Calu3 (cell line): ENCODE measurements at regions of chr9 and their contacts with region 1.

Region 1: GRCh38 chr9:131608493-131609037 is 63.2 kb downstream of the PRRT1B start:
- DNase-seq: peak; percentile 60
- H3K4me3 Mint-ChIP-seq: peak overlapping the region; percentile 31
- H3K27ac Mint-ChIP-seq: no peak overlapping the region
- H3K4me1 Mint-ChIP-seq: peaks cover 34% of the 10 kb centered on the region
- H3K27me3 Mint-ChIP-seq: no peaks in the 10 kb centered on the region
- CTCF ChIP-seq: no peak

Region 2: GRCh38 chr9:131733541-131734061 is 125.0 kb after region 1 on chr9:
- CTCF ChIA-PET with region 1: no interaction called
- intact Hi-C with region 1: loop called (anchors 5 kb)
- DNase-seq: peak; percentile 67
- H3K4me3 Mint-ChIP-seq: peak overlapping the region; percentile 49
- H3K27ac Mint-ChIP-seq: peak overlapping the region; percentile 52
- H3K4me1 Mint-ChIP-seq: peaks cover 62% of the 10 kb centered on the region
- H3K27me3 Mint-ChIP-seq: no peaks in the 10 kb centered on the region
- CTCF ChIP-seq: no peak